Panc1 (cell line): ENCODE measurements at regions of chr10 and their contacts with region 1.

Region 1: GRCh38 chr10:36640626-36641025 is 484.8 kb upstream of the ANKRD30A start:
- DNase-seq: no peak
- ATAC-seq: no peak
- H3K4me3 ChIP-seq: no peak overlapping the region
- H3K27ac ChIP-seq: no peak overlapping the region
- H3K4me1 ChIP-seq: no peaks in the 10 kb centered on the region
- H3K27me3 ChIP-seq: no peaks in the 10 kb centered on the region
- CTCF ChIP-seq: no peak

Region 2: GRCh38 chr10:36171953-36172940 is 468.4 kb before region 1 on chr10:
- CTCF ChIA-PET with region 1: no interaction called
- POLR2A ChIA-PET with region 1: interaction called, 10 read pairs
- in situ Hi-C with region 1: no loop called
- intact Hi-C with region 1: no loop called
- DNase-seq: no peak
- ATAC-seq: no peak
- H3K4me3 ChIP-seq: no peak overlapping the region
- H3K27ac ChIP-seq: no peak overlapping the region
- H3K4me1 ChIP-seq: no peaks in the 10 kb centered on the region
- H3K27me3 ChIP-seq: no peaks in the 10 kb centered on the region
- CTCF ChIP-seq: no peak

Region 3: DNA sequence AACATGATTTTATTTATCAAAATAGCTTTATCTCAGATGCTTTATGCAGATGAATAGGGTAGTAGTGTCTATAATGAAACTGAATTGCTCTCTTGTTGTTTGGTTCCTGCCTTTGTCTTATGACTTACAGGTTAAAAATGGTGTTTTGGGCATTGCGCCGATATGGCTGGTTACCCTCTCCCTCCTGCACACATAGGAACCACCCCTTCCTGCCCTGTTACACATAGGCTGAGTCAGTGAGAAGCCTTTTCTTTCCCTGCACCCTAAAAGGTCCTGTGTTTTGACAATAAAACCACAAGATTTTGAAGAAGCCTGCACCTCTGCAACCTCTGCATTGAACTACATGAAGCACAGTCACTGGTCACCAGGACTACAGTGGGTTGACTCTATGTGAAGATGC is 171.0 kb before region 1 on chr10:
- CTCF ChIA-PET with region 1: no interaction called
- POLR2A ChIA-PET with region 1: no interaction called
- in situ Hi-C with region 1: no loop called
- intact Hi-C with region 1: no loop called
- DNase-seq: no peak
- ATAC-seq: no peak
- H3K4me3 ChIP-seq: no peak overlapping the region
- H3K27ac ChIP-seq: no peak overlapping the region
- H3K4me1 ChIP-seq: no peaks in the 10 kb centered on the region
- H3K27me3 ChIP-seq: no peaks in the 10 kb centered on the region
- CTCF ChIP-seq: no peak